ENCODE measurements at regions of chr9 and their contacts with region 1.

Region 1: GRCh38 chr9:117354244-117354847 is 60.5 kb downstream of the ASTN2 start:
- DNase-seq: no peak
- H3K4me3 ChIP-seq: no peak overlapping the region
- H3K27ac ChIP-seq: peak overlapping the region in 1 of 2 experiments; percentile 97; a peak in 2 of 4 replicates
- H3K4me1 ChIP-seq: peaks cover 0 to 19% of the 10 kb centered on the region in 2 experiments; a peak in 2 of 4 replicates
- H3K27me3 ChIP-seq: no peaks in the 10 kb centered on the region
- CTCF ChIP-seq: no peak
- EP300 ChIP-seq: no peak
- RAD21 ChIP-seq: peak; percentile 61

Region 2: DNA sequence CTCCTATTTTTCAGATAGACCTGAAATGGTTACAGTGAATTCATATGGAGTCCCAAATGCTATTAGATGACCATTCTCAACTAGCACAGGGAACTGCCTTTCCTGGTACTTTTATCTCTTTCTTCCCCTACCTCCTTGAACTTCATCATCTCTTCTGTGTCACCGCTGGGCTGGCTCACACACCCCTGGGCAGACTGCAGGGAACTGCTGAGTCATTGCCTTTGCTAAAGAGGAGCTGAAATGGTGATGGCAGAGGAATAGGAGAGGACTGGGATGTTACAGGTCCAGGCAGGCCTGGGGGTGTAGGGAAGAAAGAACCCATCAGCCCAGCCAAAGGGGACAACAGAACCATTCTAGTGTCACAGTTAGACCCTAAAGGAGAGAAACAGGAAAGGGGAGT is 261.8 kb before region 1 on chr9:
- CTCF ChIA-PET with region 1: no interaction called
- POLR2A ChIA-PET with region 1: no interaction called
- DNase-seq: no peak
- H3K4me3 ChIP-seq: no peak overlapping the region
- H3K27ac ChIP-seq: peak overlapping the region in 1 of 2 experiments; percentile 48; a peak in 1 of 4 replicates
- H3K4me1 ChIP-seq: peaks cover 0 to 21% of the 10 kb centered on the region in 2 experiments; a peak in 1 of 4 replicates
- H3K27me3 ChIP-seq: no peaks in the 10 kb centered on the region
- CTCF ChIP-seq: no peak
- EP300 ChIP-seq: no peak
- RAD21 ChIP-seq: no peak

Region 3: GRCh38 chr9:117258184-117258866 is 96.0 kb before region 1 on chr9:
- CTCF ChIA-PET with region 1: no interaction called
- POLR2A ChIA-PET with region 1: no interaction called
- DNase-seq: no peak
- H3K4me3 ChIP-seq: no peak overlapping the region
- H3K27ac ChIP-seq: no peak overlapping the region
- H3K4me1 ChIP-seq: peaks cover 0 to 8% of the 10 kb centered on the region in 2 experiments; a peak in 1 of 4 replicates
- H3K27me3 ChIP-seq: no peaks in the 10 kb centered on the region
- CTCF ChIP-seq: no peak
- EP300 ChIP-seq: no peak
- RAD21 ChIP-seq: no peak

Region 4: GRCh38 chr9:117278471-117279035 is 75.8 kb before region 1 on chr9:
- CTCF ChIA-PET with region 1: interaction called, 3 read pairs
- POLR2A ChIA-PET with region 1: interaction called, 14 read pairs
- DNase-seq: peak; percentile 28
- H3K4me3 ChIP-seq: no peak overlapping the region; a peak in 1 of 4 replicates
- H3K27ac ChIP-seq: peak overlapping the region; percentile 30 to 98; a peak in 3 of 4 replicates
- H3K4me1 ChIP-seq: peaks cover 0 to 33% of the 10 kb centered on the region in 2 experiments; a peak in 2 of 4 replicates
- H3K27me3 ChIP-seq: no peaks in the 10 kb centered on the region
- CTCF ChIP-seq: no peak
- EP300 ChIP-seq: no peak
- RAD21 ChIP-seq: peak; percentile 28